B cell (primary cell): ENCODE measurements at regions of chr5 and their contacts with region 1.

Region 1: DNA sequence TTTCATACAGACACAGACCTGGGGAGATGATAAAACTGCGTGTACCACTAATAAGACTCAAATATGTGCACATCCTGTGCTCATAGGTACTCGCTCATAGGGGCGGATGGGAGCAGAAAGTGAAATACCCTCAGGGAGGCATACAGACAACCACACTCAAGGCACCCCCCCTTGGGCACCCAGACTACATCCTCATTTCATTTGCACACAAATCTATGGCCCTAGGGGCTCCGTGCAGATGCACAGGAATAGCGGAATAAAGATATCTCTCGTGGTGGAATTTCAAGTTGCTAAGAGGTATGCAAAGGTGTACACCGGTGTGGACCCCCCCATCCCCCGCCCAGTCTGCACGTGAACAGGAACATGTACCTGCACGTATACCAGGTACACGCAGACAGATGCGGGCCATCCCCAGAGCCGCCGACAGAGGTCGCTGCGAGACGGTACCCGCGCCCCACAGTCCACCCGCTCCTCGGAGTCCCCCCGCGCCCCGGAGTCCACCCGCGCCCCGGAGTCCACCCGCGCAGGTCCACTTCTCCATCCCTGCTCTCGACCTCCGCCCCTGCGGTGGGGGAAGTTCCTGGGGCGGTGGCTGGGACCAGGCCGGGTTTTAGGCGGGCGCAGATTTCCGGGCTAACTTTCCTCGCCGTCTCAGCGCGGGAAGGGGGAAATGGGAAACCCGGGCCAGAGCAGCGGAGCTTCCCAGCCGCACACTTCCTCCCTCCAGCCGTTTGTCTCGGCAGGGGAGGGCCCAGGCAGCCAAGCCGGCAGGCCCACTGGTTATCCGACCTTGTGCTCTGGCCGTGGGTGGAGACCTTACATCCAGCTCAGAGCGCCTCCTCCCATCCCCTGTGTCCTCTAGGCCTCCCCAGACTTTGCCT is 1.0 kb upstream of the IL12B start:
- DNase-seq: peak; percentile 83
- ATAC-seq: peak; percentile 55
- H3K4me3 ChIP-seq: peak overlapping the region in 4 of 5 experiments; percentile 51 to 65 (median 56)
- H3K4me3 Mint-ChIP-seq: peak overlapping the region; percentile 93
- H3K27ac ChIP-seq: peak overlapping the region; percentile 92 to 93
- H3K27ac Mint-ChIP-seq: peak overlapping the region; percentile 98
- H3K4me1 ChIP-seq: peaks cover 40 to 55% of the 10 kb centered on the region in 2 donors
- H3K4me1 Mint-ChIP-seq: peaks cover 49% of the 10 kb centered on the region
- H3K27me3 ChIP-seq: no peaks in the 10 kb centered on the region
- H3K27me3 Mint-ChIP-seq: no peaks in the 10 kb centered on the region
- CTCF ChIP-seq: peak; percentile 83

Region 2: DNA sequence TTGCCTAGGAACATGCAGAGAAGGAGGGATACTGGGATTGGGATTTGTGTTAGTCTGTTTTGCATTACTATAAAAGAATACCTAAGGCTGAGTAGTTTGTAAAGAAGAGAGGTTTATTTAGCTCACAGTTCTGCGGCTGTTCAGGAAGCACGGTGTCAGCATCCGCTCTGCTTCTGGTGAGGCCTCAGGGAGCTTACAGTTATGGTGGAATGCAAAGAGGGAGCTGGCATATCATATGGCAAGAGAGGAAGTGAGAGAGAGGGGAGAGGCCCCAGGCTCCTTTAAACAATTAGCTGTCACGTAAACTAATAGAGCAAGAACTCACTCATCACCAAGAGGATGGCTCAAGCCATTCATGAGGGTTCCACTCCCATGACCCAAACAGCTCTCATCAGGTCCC is 28.0 kb before region 1 on chr5:
- CTCF ChIA-PET with region 1: no interaction called
- POLR2A ChIA-PET with region 1: no interaction called
- intact Hi-C with region 1: loop called (anchors 1 kb)
- DNase-seq: no peak
- ATAC-seq: no peak
- H3K4me3 ChIP-seq: no peak overlapping the region
- H3K4me3 Mint-ChIP-seq: no peak overlapping the region
- H3K27ac ChIP-seq: no peak overlapping the region
- H3K27ac Mint-ChIP-seq: no peak overlapping the region
- H3K4me1 ChIP-seq: no peaks in the 10 kb centered on the region
- H3K4me1 Mint-ChIP-seq: peaks cover 18% of the 10 kb centered on the region
- H3K27me3 ChIP-seq: no peaks in the 10 kb centered on the region
- H3K27me3 Mint-ChIP-seq: no peaks in the 10 kb centered on the region
- CTCF ChIP-seq: no peak

Region 3: DNA sequence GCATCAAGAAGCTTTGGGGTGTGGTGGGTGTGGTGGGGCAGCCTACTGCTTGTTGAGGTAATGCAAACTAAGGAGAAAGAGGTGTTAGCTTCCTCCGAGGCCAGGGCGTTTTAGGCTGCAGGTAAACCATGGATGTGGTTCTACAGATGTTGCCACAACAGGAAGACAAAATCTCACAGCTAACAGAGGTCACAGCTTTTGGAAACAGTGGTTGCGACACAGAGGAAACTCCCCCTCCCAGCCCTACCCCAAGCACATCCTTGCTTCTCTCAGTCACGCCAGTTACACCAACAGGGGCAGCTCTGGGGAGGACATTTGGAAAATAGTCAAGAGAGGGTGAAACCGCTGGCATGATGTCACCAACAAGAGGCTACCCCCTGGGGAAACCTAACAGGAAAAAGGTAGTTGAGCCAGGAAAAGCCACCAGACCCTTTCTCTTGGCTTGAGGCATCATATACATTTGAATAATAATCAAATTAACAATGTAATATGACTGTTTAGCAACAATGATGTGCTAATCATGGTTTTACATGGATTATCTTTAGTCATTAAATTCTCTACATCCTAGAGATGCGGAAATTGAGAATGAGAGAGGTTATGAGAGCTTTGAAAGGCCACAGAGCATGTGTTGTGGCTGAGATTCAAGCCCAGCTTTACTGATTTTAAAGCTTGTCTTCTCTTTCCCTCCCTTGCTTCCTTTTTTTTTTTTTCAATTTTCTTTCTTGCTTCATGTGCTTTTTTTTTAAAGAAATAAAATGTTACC is 81.1 kb after region 1 on chr5:
- CTCF ChIA-PET with region 1: interaction called, 9 read pairs
- POLR2A ChIA-PET with region 1: interaction called, 4 read pairs
- intact Hi-C with region 1: loop called (anchors 2 kb)
- DNase-seq: peak; percentile 56
- ATAC-seq: peak; percentile 71
- H3K4me3 ChIP-seq: no peak overlapping the region
- H3K4me3 Mint-ChIP-seq: no peak overlapping the region
- H3K27ac ChIP-seq: peak overlapping the region; percentile 51 to 54
- H3K27ac Mint-ChIP-seq: peak overlapping the region; percentile 79
- H3K4me1 ChIP-seq: peaks cover 11 to 28% of the 10 kb centered on the region in 2 donors
- H3K4me1 Mint-ChIP-seq: peaks cover 27% of the 10 kb centered on the region
- H3K27me3 ChIP-seq: no peaks in the 10 kb centered on the region
- H3K27me3 Mint-ChIP-seq: no peaks in the 10 kb centered on the region
- CTCF ChIP-seq: no peak

Region 4: GRCh38 chr5:159504857-159505304 is 173.5 kb after region 1 on chr5:
- CTCF ChIA-PET with region 1: no interaction called
- POLR2A ChIA-PET with region 1: no interaction called
- intact Hi-C with region 1: loop called (anchors 10 kb)
- DNase-seq: no peak
- ATAC-seq: no peak
- H3K4me3 ChIP-seq: no peak overlapping the region
- H3K4me3 Mint-ChIP-seq: no peak overlapping the region
- H3K27ac ChIP-seq: no peak overlapping the region
- H3K27ac Mint-ChIP-seq: no peak overlapping the region
- H3K4me1 ChIP-seq: no peaks in the 10 kb centered on the region
- H3K4me1 Mint-ChIP-seq: no peaks in the 10 kb centered on the region
- H3K27me3 ChIP-seq: no peaks in the 10 kb centered on the region
- H3K27me3 Mint-ChIP-seq: no peaks in the 10 kb centered on the region
- CTCF ChIP-seq: no peak

Region 5: DNA sequence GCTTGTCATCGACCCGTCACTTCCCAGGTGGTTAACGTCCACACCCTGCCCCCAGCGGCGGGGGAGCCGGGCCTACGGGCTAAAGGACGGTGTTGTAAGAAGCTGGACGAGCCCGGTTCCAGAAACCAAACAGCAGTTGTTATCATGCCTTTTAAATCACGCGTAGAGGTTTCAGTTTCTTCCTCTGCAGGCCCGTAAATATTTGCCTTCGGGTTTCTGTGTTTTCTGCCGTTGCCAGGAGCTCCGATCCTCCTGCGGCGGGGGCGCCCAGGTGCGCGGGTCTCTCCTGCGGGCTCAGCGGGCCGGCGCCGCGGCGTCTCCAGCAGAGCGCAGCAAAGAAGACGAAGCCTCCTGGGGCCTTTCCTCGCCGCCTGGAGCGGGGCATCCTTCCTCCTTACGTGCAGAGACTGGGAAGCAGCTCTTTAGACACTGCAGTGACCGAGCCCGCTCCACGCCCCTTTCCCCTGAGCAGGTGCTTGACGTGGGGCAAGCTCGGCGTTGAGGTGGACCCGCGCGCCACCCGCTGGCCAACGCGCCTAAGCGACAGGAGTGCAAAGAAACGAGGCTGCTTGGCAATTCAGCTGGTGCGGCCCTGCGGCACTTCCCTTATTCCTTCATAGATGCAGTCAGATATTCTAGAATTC is 655.8 kb after region 1 on chr5:
- CTCF ChIA-PET with region 1: interaction called, 13 read pairs
- POLR2A ChIA-PET with region 1: interaction called, 3 read pairs
- intact Hi-C with region 1: loop called (anchors 1 kb)
- DNase-seq: peak; percentile 88
- ATAC-seq: peak; percentile 98
- H3K4me3 ChIP-seq: peak overlapping the region in 4 of 5 experiments; percentile 42 to 60 (median 54)
- H3K4me3 Mint-ChIP-seq: peak overlapping the region; percentile 79
- H3K27ac ChIP-seq: peak overlapping the region in 1 of 2 donors; percentile 45
- H3K27ac Mint-ChIP-seq: peak overlapping the region; percentile 51
- H3K4me1 ChIP-seq: peaks cover 6 to 7% of the 10 kb centered on the region in 2 donors
- H3K4me1 Mint-ChIP-seq: peaks cover 7% of the 10 kb centered on the region
- H3K27me3 ChIP-seq: peaks cover 0 to 4% (median 0%) of the 10 kb centered on the region in 4 experiments
- H3K27me3 Mint-ChIP-seq: peaks cover 16% of the 10 kb centered on the region
- CTCF ChIP-seq: peak; percentile 79